K562 (cell line): ENCODE measurements at regions of chr1 and their contacts with region 1.

Region 1: DNA sequence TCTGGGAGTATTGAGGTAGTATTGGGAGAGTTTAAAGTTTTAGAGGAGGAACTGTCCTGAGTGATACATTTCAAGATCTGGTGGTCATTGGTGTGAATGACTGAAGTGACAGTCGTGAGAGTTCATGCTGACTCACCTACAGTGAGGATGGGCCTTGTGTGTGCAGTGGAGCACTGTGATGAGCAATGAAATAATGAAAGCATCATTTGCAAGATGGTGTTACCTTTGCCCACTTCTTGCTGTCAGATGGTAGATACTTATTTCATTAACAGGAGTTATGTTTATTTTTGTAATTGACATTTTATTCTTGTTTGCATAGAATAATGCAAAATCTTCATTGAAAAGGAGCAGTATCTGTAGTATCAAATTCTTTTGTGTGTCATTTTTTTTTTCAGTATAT is 29.0 kb downstream of the POU2F1 start:
- DNase-seq: peak in 3 of 4 experiments; percentile 31 to 62 (median 39)
- ATAC-seq: peak; percentile 82
- H3K4me3 ChIP-seq: no peak overlapping the region
- H3K27ac ChIP-seq: no peak overlapping the region; the same call in 2 of the 3 replicates
- H3K4me1 ChIP-seq: peaks cover 15 to 28% of the 10 kb centered on the region in 2 experiments
- H3K27me3 ChIP-seq: no peaks in the 10 kb centered on the region
- CTCF ChIP-seq: no peak
- EP300 ChIP-seq: no peak
- POLR2A ChIP-seq: no peak
- RAD21 ChIP-seq: no peak

Region 2: GRCh38 chr1:167229719-167230385 is 19.9 kb before region 1 on chr1:
- CTCF ChIA-PET with region 1: no interaction called
- POLR2A ChIA-PET with region 1: interaction called, 7 read pairs
- in situ Hi-C with region 1: no loop called
- intact Hi-C with region 1: loop called (anchors 2 kb)
- DNase-seq: peak in 2 of 4 experiments; percentile 41 to 63
- ATAC-seq: peak; percentile 59
- H3K4me3 ChIP-seq: no peak overlapping the region
- H3K27ac ChIP-seq: peak overlapping the region; percentile 67
- H3K4me1 ChIP-seq: peaks cover 11 to 40% of the 10 kb centered on the region in 2 experiments
- H3K27me3 ChIP-seq: no peaks in the 10 kb centered on the region
- CTCF ChIP-seq: no peak
- EP300 ChIP-seq: peak; percentile 78
- POLR2A ChIP-seq: no peak
- RAD21 ChIP-seq: 0 out of 4 replicates have a peak, but pooled peaks of 1 of the 2 experiments have one; percentile 9